ENCODE measurements at regions of chr19 and their contacts with region 1.

Region 1: GRCh38 chr19:6087074-6087571 is 23.2 kb downstream of the RFX2 start:
- DNase-seq: no peak
- H3K4me3 ChIP-seq: peak overlapping the region; percentile 37; the same call in 1 of the 2 replicates
- H3K27ac ChIP-seq: peak overlapping the region; percentile 96
- H3K4me1 ChIP-seq: peaks cover 55% of the 10 kb centered on the region
- H3K27me3 ChIP-seq: no peaks in the 10 kb centered on the region
- CTCF ChIP-seq: no peak

Region 2: GRCh38 chr19:5977785-5978605 is 109.1 kb before region 1 on chr19 and contains the start of gene RANBP3:
- CTCF ChIA-PET with region 1: no interaction called
- POLR2A ChIA-PET with region 1: interaction called, 26 read pairs
- intact Hi-C with region 1: no loop called
- DNase-seq: peak; percentile 89 to 95
- H3K4me3 ChIP-seq: peak within 1 kb of the TSS; percentile 87
- H3K27ac ChIP-seq: peak within 1 kb of the TSS; percentile 59
- H3K4me1 ChIP-seq: peaks cover 16% of the 10 kb centered on the region
- H3K27me3 ChIP-seq: no peaks in the 10 kb centered on the region
- CTCF ChIP-seq: no peak
- total RNA-seq, gene RANBP3: 43.7 and 44.1 TPM in 2 replicates

Region 3: DNA sequence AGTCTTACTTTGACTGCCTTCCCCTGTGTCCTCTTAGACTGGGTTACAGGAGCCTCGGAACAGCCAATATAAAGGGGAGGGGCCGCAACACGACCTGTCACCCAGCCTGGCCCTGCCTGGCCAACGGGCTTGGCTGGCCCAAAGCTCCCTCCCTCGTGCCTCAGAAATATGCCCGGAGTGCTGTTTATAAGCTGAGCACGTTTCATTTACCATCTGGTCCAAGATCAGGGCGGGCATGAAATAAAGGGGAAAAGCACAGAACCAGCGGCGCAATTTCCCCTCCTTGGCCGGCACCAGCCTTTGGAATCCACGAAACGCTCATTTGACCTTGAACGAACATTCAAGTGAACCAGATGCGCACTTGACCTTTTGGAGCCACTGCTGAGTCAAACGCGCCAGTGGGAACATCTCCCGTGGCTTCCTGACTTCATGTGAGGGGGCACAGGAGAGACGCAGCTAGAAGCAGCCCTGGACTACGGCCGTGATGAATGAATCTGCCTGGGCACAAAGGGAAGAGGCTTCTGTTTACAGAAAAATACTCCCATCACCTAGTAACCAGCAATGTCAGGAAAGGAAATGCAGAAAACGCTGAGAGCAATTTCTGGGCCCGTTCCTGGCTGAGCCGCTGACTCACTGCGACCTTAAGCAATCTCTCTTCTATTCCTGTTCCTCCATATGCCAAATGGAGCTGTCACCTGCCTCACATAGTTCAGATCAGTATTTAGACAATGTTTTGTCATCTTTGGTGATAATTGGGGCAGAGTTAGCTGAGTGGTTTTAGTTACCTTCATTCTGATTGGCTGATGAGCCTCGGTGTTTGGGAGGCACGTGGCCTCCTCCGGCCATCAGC is 30.1 kb before region 1 on chr19:
- CTCF ChIA-PET with region 1: no interaction called
- POLR2A ChIA-PET with region 1: interaction called, 8 read pairs
- intact Hi-C with region 1: loop called (anchors 1 kb)
- DNase-seq: peak; percentile 74 to 96
- H3K4me3 ChIP-seq: peak overlapping the region; percentile 39; the same call in 1 of the 2 replicates
- H3K27ac ChIP-seq: peak overlapping the region; percentile 81
- H3K4me1 ChIP-seq: peaks cover 41% of the 10 kb centered on the region
- H3K27me3 ChIP-seq: no peaks in the 10 kb centered on the region
- CTCF ChIP-seq: no peak

Region 4: GRCh38 chr19:6076675-6077463 is 10.3 kb before region 1 on chr19:
- CTCF ChIA-PET with region 1: interaction called, 3 read pairs
- POLR2A ChIA-PET with region 1: interaction called, 22 read pairs
- intact Hi-C with region 1: no loop called
- DNase-seq: peak in 1 of 2 experiments; percentile 80
- H3K4me3 ChIP-seq: no peak overlapping the region
- H3K27ac ChIP-seq: peak overlapping the region; percentile 61
- H3K4me1 ChIP-seq: peaks cover 13% of the 10 kb centered on the region
- H3K27me3 ChIP-seq: no peaks in the 10 kb centered on the region
- CTCF ChIP-seq: no peak

Region 5: GRCh38 chr19:6110360-6110977 is 23.3 kb after region 1 on chr19 and contains the start of gene RFX2:
- CTCF ChIA-PET with region 1: interaction called, 5 read pairs
- POLR2A ChIA-PET with region 1: interaction called, 3 read pairs
- intact Hi-C with region 1: loop called (anchors 1 kb)
- DNase-seq: peak; percentile 86 to 97
- H3K4me3 ChIP-seq: peak within 1 kb of the TSS; percentile 60
- H3K27ac ChIP-seq: no peak within 1 kb of the TSS
- H3K4me1 ChIP-seq: 0 out of 2 replicates have a peak, but pooled peaks cover 5% of the 10 kb centered on the region
- H3K27me3 ChIP-seq: no peaks in the 10 kb centered on the region
- CTCF ChIP-seq: no peak
- total RNA-seq, gene RFX2: 8.7 and 11.6 TPM in 2 replicates